ENCODE measurements at regions of chr11 and their contacts with region 1.

Region 1: DNA sequence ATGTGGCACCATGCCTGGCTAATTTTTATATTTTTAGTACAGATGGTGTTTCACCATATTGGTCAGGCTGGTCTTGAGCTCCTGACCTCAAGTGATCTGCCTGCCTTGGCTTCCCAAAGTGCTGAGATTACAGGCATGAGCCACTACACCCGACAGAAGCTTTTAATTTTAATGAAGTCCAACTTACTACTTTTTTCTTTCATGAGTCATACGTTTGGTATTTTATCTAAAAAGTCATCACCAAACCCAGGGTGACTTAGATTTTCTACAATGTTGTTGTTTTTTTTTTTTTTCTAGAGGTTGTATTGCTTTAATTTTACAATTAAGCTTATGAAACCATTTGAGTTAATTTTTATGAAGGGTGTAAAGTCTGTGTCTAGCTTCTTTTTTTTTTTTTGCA is 34.9 kb downstream of the JRKL start:
- DNase-seq: peak; percentile 44
- ATAC-seq: no peak; the same call in 1 of the 2 replicates
- H3K4me3 ChIP-seq: no peak overlapping the region
- H3K27ac ChIP-seq: no peak overlapping the region
- H3K4me1 ChIP-seq: no peaks in the 10 kb centered on the region
- H3K27me3 ChIP-seq: no peaks in the 10 kb centered on the region
- CTCF ChIP-seq: no peak
- POLR2A ChIP-seq: no peak
- RAD21 ChIP-seq: no peak

Region 2: DNA sequence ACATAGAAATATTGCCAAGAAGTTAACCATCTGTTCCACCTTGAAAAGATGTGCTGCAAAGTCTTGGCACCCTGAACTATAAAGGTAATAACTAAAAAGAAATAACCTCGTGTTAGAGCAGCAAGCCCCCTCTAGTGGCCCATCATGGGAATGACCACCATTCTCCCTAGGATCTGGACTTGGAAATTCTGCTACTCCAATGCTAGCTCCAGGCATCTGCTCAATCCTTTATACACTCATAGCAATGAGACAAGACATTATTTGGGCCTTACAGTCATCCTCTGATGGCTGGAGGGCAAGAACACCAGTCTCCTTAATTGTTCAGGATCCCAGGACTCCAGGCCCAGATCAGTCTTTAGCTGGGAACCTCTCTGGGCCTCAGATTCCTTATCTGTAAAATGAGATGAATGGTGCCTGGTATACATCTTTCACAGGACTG is 1527.3 kb before region 1 on chr11:
- CTCF ChIA-PET with region 1: no interaction called
- POLR2A ChIA-PET with region 1: no interaction called
- dilution Hi-C with region 1: no loop called
- in situ Hi-C with region 1: no loop called
- intact Hi-C with region 1: loop called (anchors 10 kb)
- DNase-seq: peak; percentile 45
- ATAC-seq: peak; percentile 83
- H3K4me3 ChIP-seq: no peak overlapping the region
- H3K27ac ChIP-seq: no peak overlapping the region
- H3K4me1 ChIP-seq: peaks cover 4% of the 10 kb centered on the region; the same call in 1 of the 2 replicates
- H3K27me3 ChIP-seq: no peaks in the 10 kb centered on the region
- CTCF ChIP-seq: peak; percentile 77
- POLR2A ChIP-seq: no peak
- RAD21 ChIP-seq: peak; percentile 77

Region 3: GRCh38 chr11:95067039-95067840 is 1357.5 kb before region 1 on chr11:
- CTCF ChIA-PET with region 1: no interaction called
- POLR2A ChIA-PET with region 1: interaction called, 4 read pairs
- dilution Hi-C with region 1: no loop called
- in situ Hi-C with region 1: loop called (anchors 25 kb)
- intact Hi-C with region 1: loop called (anchors 5 kb)
- DNase-seq: peak; percentile 72
- ATAC-seq: peak; percentile 90
- H3K4me3 ChIP-seq: peak overlapping the region; percentile 91
- H3K27ac ChIP-seq: peak overlapping the region; percentile 85
- H3K4me1 ChIP-seq: no peaks in the 10 kb centered on the region
- H3K27me3 ChIP-seq: no peaks in the 10 kb centered on the region
- CTCF ChIP-seq: peak; percentile 65
- POLR2A ChIP-seq: peak; percentile 57
- RAD21 ChIP-seq: peak; percentile 24; the same call in 1 of the 2 replicates

Region 4: DNA sequence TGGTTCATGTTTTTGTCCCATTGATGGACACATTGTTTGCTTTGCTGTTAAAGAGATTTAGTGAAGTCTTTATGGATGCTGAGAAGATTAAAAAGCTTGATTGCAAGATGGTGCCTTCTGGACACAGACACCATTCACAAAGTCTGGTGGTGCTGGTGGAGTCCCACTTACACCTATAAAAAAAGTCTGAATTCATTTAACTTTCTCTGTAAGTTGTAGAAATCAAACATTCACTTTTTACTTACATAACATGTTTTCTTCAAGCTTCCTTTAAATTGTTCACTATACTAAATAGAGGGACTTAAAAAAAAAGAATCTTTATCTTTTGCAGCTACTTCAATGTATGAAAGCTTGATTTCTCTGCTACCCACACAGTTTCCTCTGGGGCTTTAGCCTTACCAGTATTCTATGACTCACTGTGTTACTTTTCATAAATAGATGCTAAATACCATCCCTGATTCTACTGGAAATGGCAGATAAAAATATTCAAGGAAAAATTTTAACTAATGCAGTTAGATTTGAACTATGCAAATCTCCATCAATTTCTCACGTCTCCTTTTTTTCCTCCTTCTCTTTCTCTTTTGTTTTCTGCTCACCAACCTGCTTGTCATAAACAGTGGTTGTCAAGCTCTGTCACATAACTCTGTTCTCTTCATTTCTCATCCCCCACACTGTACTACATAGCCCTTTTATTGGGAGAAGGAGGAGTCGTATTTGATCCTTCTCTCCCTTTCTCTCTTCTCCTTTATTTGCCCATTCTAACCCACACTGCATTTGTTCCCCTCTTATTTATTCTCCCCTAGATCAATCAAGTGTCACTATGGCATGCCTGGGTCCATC is 724.8 kb before region 1 on chr11:
- CTCF ChIA-PET with region 1: no interaction called
- POLR2A ChIA-PET with region 1: no interaction called
- dilution Hi-C with region 1: no loop called
- in situ Hi-C with region 1: no loop called
- intact Hi-C with region 1: loop called (anchors 5 kb)
- DNase-seq: peak; percentile 49
- ATAC-seq: peak; percentile 82
- H3K4me3 ChIP-seq: no peak overlapping the region
- H3K27ac ChIP-seq: no peak overlapping the region
- H3K4me1 ChIP-seq: peaks cover 14% of the 10 kb centered on the region
- H3K27me3 ChIP-seq: no peaks in the 10 kb centered on the region
- CTCF ChIP-seq: no peak
- POLR2A ChIP-seq: no peak
- RAD21 ChIP-seq: no peak

Region 5: DNA sequence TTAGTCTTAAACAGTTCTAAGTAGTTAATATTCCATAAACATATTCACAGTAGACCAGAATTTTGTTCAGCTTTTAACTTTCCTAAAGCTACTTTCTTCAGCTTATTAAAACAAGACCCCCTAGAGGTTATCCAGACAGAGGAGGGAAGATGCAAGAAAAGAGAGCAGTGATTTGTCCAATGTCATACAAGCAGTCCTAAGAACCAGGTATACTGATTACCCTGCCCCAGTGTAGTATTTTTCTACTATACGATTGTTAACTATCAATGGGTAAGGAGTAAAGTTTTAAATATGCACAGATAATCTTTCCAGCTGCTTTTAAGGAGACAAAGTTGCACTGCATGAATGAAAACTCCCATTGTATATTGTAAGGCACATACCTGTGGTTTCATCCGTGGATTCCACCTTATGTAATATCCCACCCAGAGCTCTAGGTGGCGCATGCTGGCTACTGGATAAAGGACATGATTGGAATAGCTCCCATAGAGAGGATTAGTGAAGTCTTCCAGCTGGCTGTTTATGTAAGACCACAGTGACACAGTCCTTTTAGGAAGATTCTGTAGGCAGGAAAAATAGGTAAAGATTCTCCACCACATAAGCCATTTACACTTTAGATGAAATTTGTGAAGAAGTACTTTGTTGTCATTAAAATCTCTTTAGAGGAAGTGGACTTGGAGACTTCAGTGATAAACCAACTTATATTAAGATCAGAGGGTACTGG is 588.8 kb before region 1 on chr11:
- CTCF ChIA-PET with region 1: interaction called, 3 read pairs
- POLR2A ChIA-PET with region 1: no interaction called
- dilution Hi-C with region 1: no loop called
- in situ Hi-C with region 1: no loop called
- intact Hi-C with region 1: loop called (anchors 1 kb)
- DNase-seq: peak; percentile 96
- ATAC-seq: peak; percentile 84
- H3K4me3 ChIP-seq: no peak overlapping the region
- H3K27ac ChIP-seq: no peak overlapping the region
- H3K4me1 ChIP-seq: peaks cover 12% of the 10 kb centered on the region
- H3K27me3 ChIP-seq: no peaks in the 10 kb centered on the region
- CTCF ChIP-seq: peak; percentile 97
- POLR2A ChIP-seq: no peak
- RAD21 ChIP-seq: peak; percentile 95

Measured in IMR-90 (cell line).